H1 (cell line): ENCODE measurements at regions of chr3 and their contacts with region 1.

Region 1: GRCh38 chr3:172138795-172139441 is 99.5 kb downstream of the FNDC3B start:
- DNase-seq: no peak
- H3K4me3 ChIP-seq: peak overlapping the region in 2 of 4 experiments; percentile 13 to 20; a peak in 2 of 8 replicates
- H3K27ac ChIP-seq: no peak overlapping the region; the same call in 1 of the 2 replicates
- H3K4me1 ChIP-seq: peaks cover 5 to 41% (median 32%) of the 10 kb centered on the region in 4 experiments
- H3K27me3 ChIP-seq: no peaks in the 10 kb centered on the region
- CTCF ChIP-seq: no peak
- EP300 ChIP-seq: no peak
- POLR2A ChIP-seq: no peak
- RAD21 ChIP-seq: no peak

Region 2: GRCh38 chr3:172153335-172153861 is 14.5 kb after region 1 on chr3:
- CTCF ChIA-PET with region 1: interaction called, 12 read pairs
- POLR2A ChIA-PET with region 1: interaction called, 5 read pairs
- DNase-seq: no peak
- H3K4me3 ChIP-seq: no peak overlapping the region
- H3K27ac ChIP-seq: no peak overlapping the region
- H3K4me1 ChIP-seq: peaks cover 11 to 33% (median 30%) of the 10 kb centered on the region in 4 experiments
- H3K27me3 ChIP-seq: no peaks in the 10 kb centered on the region
- CTCF ChIP-seq: no peak
- EP300 ChIP-seq: no peak
- POLR2A ChIP-seq: no peak
- RAD21 ChIP-seq: no peak